PC-3 (cell line): ENCODE measurements at regions of chr11 and their contacts with region 1.

Region 1: GRCh38 chr11:31788085-31788484 is 23.0 kb downstream of the PAX6 start:
- DNase-seq: no peak
- ATAC-seq: no peak
- H3K4me3 ChIP-seq: no peak overlapping the region
- H3K27ac ChIP-seq: no peak overlapping the region
- H3K4me1 ChIP-seq: no peaks in the 10 kb centered on the region
- H3K27me3 ChIP-seq: no peaks in the 10 kb centered on the region
- CTCF ChIP-seq: no peak

Region 2: GRCh38 chr11:31728432-31728831 is 59.7 kb before region 1 on chr11:
- CTCF ChIA-PET with region 1: interaction called, 12 read pairs
- POLR2A ChIA-PET with region 1: no interaction called
- intact Hi-C with region 1: no loop called
- DNase-seq: no peak
- ATAC-seq: no peak
- H3K4me3 ChIP-seq: no peak overlapping the region
- H3K27ac ChIP-seq: no peak overlapping the region
- H3K4me1 ChIP-seq: no peaks in the 10 kb centered on the region
- H3K27me3 ChIP-seq: no peaks in the 10 kb centered on the region
- CTCF ChIP-seq: no peak

Region 3: GRCh38 chr11:31798554-31799434 is 10.7 kb after region 1 on chr11:
- CTCF ChIA-PET with region 1: no interaction called
- POLR2A ChIA-PET with region 1: no interaction called
- intact Hi-C with region 1: no loop called
- DNase-seq: no peak
- ATAC-seq: no peak
- H3K4me3 ChIP-seq: no peak overlapping the region
- H3K27ac ChIP-seq: no peak overlapping the region
- H3K4me1 ChIP-seq: no peaks in the 10 kb centered on the region
- H3K27me3 ChIP-seq: no peaks in the 10 kb centered on the region
- CTCF ChIP-seq: no peak

Region 4: DNA sequence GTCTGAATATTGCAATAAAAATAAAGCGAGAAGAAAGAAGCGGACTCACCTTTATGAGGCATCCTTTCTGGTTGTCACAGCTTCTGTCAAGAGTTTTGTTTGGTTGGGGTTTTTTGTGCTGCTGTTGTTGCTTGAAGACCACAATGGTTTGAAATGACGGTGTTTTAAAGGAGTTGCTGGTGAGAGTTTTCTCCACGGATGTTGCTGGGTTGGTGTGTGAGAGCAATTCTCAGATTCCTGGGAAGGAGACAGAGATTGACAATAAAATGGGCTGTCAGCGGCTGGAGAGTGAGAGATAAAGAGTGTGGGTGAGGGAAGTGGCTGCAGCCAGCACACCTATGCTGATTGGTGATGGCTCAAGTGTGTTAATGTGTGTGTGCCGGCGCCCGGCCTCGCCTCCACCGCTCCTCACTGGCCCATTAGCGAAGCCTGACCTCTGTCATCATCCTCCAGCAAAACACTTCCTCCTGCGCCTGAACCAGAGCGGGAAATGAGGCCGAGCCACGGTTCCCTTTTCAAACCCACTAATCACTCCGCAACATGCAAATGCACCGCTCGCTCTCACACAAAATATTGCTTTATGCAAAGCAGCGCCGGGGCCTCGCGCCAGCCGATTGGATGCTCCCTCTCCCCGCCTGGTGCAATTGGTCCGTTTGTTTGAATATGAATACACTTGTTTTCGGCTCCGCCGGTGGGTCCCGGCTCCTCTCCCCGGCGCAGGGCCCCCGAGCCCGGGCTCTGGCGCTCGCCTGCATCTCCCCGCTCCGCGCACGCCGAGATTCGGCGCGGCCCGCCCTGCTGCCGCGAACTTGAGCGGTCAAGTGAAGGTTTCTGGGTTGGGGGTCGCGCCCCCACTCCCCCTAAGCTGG is 22.9 kb after region 1 on chr11 and contains the start of gene PAX6:
- CTCF ChIA-PET with region 1: no interaction called
- POLR2A ChIA-PET with region 1: no interaction called
- intact Hi-C with region 1: no loop called
- DNase-seq: peak; percentile 74
- ATAC-seq: peak; percentile 39
- H3K4me3 ChIP-seq: peak within 1 kb of the TSS; percentile 93
- H3K27ac ChIP-seq: peak within 1 kb of the TSS; percentile 57
- H3K4me1 ChIP-seq: peaks cover 36% of the 10 kb centered on the region
- H3K27me3 ChIP-seq: no peaks in the 10 kb centered on the region
- CTCF ChIP-seq: no peak
- total RNA-seq, gene PAX6: 14.6 and 25.7 TPM in 2 replicates